Ascending aorta (tissue), 2 donors: ENCODE measurements at regions of chr5 and their contacts with region 1.

Region 1: DNA sequence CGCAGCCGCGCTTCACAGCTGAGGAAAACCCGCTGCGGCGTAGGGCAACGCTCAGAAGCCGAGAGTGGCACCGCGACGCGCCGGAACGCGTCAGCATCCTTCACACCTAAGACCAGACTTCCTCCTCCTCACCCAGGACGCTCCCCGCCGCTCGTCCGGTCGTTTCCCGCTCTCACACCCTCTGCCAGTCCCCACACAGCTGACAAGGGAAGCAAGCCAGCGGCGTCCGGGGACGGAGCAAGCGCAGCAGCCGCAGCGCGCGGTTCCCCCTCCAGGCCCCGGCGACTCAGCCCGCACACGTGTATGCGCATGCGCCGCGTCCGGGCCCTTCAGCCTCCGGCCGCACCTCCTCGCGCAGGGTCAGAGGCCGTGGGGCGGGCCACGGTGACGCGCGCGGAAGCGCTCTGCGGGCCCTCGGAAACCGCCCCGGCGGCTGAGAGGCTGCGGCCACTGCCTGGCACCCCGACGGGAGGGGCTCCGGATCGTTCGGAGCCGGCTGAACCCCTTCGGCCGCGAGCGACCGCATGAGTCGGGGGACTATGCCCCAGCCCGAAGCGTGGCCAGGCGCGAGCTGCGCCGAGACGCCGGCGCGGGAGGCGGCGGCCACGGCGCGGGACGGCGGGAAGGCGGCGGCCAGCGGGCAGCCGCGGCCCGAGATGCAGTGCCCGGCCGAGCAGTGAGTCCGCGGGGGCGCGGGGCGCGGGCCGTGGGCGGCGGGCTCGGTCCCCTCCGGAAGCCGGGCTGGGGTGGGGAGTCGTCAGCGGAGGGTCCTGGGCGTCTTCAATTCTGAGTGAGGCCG is at the start of gene OTULIN:
- DNase-seq: peak; percentile 70 to 95
- H3K4me3 ChIP-seq: peak within 1 kb of the TSS; percentile 72 to 83
- H3K27ac ChIP-seq: peak within 1 kb of the TSS; percentile 93 to 97
- H3K4me1 ChIP-seq: peaks cover 5 to 30% of the 10 kb centered on the region in 2 donors
- H3K27me3 ChIP-seq: no peaks in the 10 kb centered on the region
- CTCF ChIP-seq: peak in 1 of 3 experiments; percentile 5
- total RNA-seq, gene OTULIN: 56.9 TPM

Region 2: GRCh38 chr5:14581333-14581890 is 83.1 kb before region 1 on chr5 and contains the start of gene OTULINL:
- intact Hi-C with region 1: loop called (anchors 5 kb)
- DNase-seq: peak; percentile 46 to 89
- H3K4me3 ChIP-seq: peak within 1 kb of the TSS; percentile 66 to 85
- H3K27ac ChIP-seq: peak within 1 kb of the TSS in 1 of 2 donors; percentile 15
- H3K4me1 ChIP-seq: peaks cover 0 to 6% of the 10 kb centered on the region in 2 donors
- H3K27me3 ChIP-seq: no peaks in the 10 kb centered on the region
- CTCF ChIP-seq: no peak
- total RNA-seq, gene OTULINL: 0.21 TPM

Region 3: DNA sequence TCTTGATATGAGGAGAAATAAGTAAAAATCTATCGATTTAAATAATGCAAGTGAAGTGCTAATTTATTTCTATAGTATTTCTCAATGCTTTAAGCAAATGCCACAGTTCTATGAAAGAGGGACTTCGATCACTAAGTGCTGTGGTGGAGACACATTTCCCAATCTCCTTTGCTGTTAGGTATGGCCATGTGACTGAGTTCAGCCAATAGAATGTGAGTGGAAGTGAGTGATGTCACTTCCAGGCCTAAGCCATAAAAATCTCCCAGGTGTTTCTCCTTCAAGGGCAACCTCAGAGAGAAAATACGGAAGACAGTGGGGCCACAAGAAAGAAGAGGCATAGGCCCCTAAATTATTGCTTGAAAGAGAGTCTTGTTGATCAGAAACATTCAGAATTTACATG is 307.4 kb after region 1 on chr5:
- intact Hi-C with region 1: no loop called
- DNase-seq: no peak
- H3K4me3 ChIP-seq: no peak overlapping the region
- H3K27ac ChIP-seq: no peak overlapping the region
- H3K4me1 ChIP-seq: no peaks in the 10 kb centered on the region
- H3K27me3 ChIP-seq: no peaks in the 10 kb centered on the region
- CTCF ChIP-seq: no peak